MCF 10A (cell line): ENCODE measurements at regions of chr12 and their contacts with region 1.

Region 1: GRCh38 chr12:63766498-63766897 is 13.2 kb upstream of the RXYLT1 start:
- DNase-seq: no peak
- H3K4me3 Mint-ChIP-seq: no peak overlapping the region
- H3K27ac Mint-ChIP-seq: no peak overlapping the region
- H3K4me1 Mint-ChIP-seq: no peaks in the 10 kb centered on the region
- H3K27me3 Mint-ChIP-seq: peaks cover 86% of the 10 kb centered on the region
- CTCF ChIP-seq: peak; percentile 21

Region 2: GRCh38 chr12:63753744-63754143 is 12.8 kb before region 1 on chr12:
- CTCF ChIA-PET with region 1: interaction called, 13 read pairs
- POLR2A ChIA-PET with region 1: interaction called, 3 read pairs
- intact Hi-C with region 1: no loop called
- DNase-seq: peak; percentile 16
- H3K4me3 Mint-ChIP-seq: no peak overlapping the region
- H3K27ac Mint-ChIP-seq: no peak overlapping the region
- H3K4me1 Mint-ChIP-seq: no peaks in the 10 kb centered on the region
- H3K27me3 Mint-ChIP-seq: peaks cover 80% of the 10 kb centered on the region
- CTCF ChIP-seq: peak; percentile 13

Region 3: GRCh38 chr12:63888908-63889635 is 122.6 kb after region 1 on chr12:
- CTCF ChIA-PET with region 1: no interaction called
- POLR2A ChIA-PET with region 1: no interaction called
- intact Hi-C with region 1: no loop called
- DNase-seq: peak; percentile 39
- H3K4me3 Mint-ChIP-seq: no peak overlapping the region
- H3K27ac Mint-ChIP-seq: peak overlapping the region; percentile 27
- H3K4me1 Mint-ChIP-seq: peaks cover 33% of the 10 kb centered on the region
- H3K27me3 Mint-ChIP-seq: no peaks in the 10 kb centered on the region
- CTCF ChIP-seq: no peak